MCF 10A (cell line): ENCODE measurements at regions of chr17 and their contacts with region 1.

Region 1: DNA sequence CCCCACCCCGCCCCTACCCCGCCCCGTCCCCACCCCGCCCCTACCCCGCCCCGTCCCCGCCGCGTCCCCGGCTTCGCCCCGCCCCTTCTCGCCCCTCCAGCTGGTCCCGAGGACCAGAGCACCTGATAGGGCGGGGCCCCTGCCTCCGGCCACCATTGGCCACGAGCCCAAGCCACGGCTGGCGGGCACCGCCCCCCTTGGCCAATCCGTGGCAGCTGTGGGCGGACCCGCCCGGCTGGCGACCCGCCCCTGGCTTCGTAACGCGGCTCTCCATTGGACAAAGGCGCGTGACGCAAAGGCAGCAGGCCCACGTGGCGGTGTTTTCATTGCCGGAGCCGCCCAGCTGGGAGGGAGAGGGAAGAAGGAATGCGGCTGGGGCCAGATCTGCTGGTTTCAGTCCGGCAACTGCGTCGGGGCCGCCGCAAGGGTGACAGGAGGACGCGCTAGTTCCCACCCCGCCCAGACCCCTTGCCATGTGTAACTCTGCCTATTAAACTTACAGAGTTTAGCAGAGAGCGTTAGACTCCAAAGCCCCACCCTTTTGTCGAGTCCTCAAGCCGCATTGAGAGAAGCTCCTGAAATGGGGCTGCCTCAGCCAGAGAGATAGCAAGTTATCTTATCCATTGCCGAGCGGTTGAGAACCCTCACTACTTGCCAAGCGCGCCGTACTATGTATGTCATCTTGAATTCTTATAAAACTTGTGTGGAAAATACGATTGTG is 403 bp upstream of the WIPI1 start:
- DNase-seq: peak; percentile 97
- H3K4me3 Mint-ChIP-seq: peak overlapping the region; percentile 96
- H3K27ac Mint-ChIP-seq: peak overlapping the region; percentile 51
- H3K4me1 Mint-ChIP-seq: peaks cover 33% of the 10 kb centered on the region
- H3K27me3 Mint-ChIP-seq: no peaks in the 10 kb centered on the region
- CTCF ChIP-seq: no peak

Region 2: GRCh38 chr17:67717624-67718329 is 739.9 kb before region 1 on chr17 and contains the start of gene NOL11:
- CTCF ChIA-PET with region 1: no interaction called
- POLR2A ChIA-PET with region 1: no interaction called
- intact Hi-C with region 1: loop called (anchors 5 kb)
- DNase-seq: peak; percentile 97
- H3K4me3 Mint-ChIP-seq: peak within 1 kb of the TSS; percentile 98
- H3K27ac Mint-ChIP-seq: peak within 1 kb of the TSS; percentile 100
- H3K4me1 Mint-ChIP-seq: no peaks in the 10 kb centered on the region
- H3K27me3 Mint-ChIP-seq: no peaks in the 10 kb centered on the region
- CTCF ChIP-seq: peak; percentile 74
- total RNA-seq, gene NOL11: 45.4 and 50.4 TPM in 2 replicates

Region 3: GRCh38 chr17:67993596-67994361 is 463.9 kb before region 1 on chr17:
- CTCF ChIA-PET with region 1: no interaction called
- POLR2A ChIA-PET with region 1: interaction called, 11 read pairs
- intact Hi-C with region 1: no loop called
- DNase-seq: peak; percentile 78
- H3K4me3 Mint-ChIP-seq: peak overlapping the region; percentile 91
- H3K27ac Mint-ChIP-seq: peak overlapping the region; percentile 79
- H3K4me1 Mint-ChIP-seq: peaks cover 26% of the 10 kb centered on the region
- H3K27me3 Mint-ChIP-seq: no peaks in the 10 kb centered on the region
- CTCF ChIP-seq: no peak

Region 4: GRCh38 chr17:68247445-68248198 is 210.1 kb before region 1 on chr17 and contains the start of gene AMZ2:
- CTCF ChIA-PET with region 1: interaction called, 7 read pairs
- POLR2A ChIA-PET with region 1: interaction called, 75 read pairs
- intact Hi-C with region 1: no loop called
- DNase-seq: peak; percentile 89
- H3K4me3 Mint-ChIP-seq: peak within 1 kb of the TSS; percentile 90
- H3K27ac Mint-ChIP-seq: peak within 1 kb of the TSS; percentile 74
- H3K4me1 Mint-ChIP-seq: peaks cover 5% of the 10 kb centered on the region
- H3K27me3 Mint-ChIP-seq: no peaks in the 10 kb centered on the region
- CTCF ChIP-seq: no peak
- total RNA-seq, gene AMZ2: 127 and 147 TPM in 2 replicates

Region 5: DNA sequence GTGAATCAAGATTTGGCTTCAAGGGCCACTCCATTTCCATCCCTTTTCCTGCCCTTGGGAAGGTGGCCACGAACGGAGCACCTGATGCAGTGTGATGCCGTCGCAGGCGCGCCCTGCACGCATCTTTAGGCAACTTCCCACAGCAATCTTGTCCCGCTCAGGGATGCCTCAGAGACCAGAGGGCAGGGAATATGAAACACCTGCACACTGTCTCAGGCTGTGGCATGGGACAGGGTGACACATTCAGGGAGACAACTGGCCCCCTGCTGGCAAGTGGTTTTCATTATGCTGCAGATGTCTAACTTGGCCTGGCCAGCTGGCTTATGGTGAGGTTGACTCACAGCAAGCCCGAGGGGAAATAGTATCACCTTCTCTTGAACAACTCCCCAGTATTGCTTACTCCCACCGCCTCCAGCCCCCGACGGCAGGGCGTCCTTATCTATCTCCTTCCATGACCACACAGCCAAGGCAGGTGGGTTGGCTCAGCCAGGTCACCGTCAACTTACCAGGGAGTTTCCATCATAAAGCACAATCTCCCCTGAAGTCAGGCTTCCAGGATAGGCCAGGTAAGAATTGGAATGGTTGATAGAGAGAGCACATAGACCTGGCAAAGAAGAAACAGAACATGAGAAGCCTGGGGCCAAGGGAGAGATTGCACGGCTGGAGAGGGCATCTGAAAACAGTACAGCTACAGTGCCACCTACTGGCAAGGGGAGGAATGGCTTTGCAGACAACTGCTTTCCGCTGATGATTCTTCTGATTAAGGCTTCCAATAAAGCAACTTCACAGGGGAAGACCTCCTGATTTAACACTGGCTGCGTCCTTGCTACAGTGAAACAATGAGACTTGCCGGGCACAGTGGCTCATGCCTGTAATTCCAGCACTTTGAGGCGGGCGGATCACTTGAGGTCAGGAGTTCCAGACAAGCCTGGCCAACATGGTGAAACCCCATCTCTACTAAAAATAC is 21.5 kb before region 1 on chr17:
- CTCF ChIA-PET with region 1: interaction called, 14 read pairs
- POLR2A ChIA-PET with region 1: interaction called, 28 read pairs
- intact Hi-C with region 1: loop called (anchors 1 kb)
- DNase-seq: peak; percentile 86
- H3K4me3 Mint-ChIP-seq: no peak overlapping the region
- H3K27ac Mint-ChIP-seq: no peak overlapping the region
- H3K4me1 Mint-ChIP-seq: peaks cover 9% of the 10 kb centered on the region
- H3K27me3 Mint-ChIP-seq: no peaks in the 10 kb centered on the region
- CTCF ChIP-seq: peak; percentile 82

Region 6: DNA sequence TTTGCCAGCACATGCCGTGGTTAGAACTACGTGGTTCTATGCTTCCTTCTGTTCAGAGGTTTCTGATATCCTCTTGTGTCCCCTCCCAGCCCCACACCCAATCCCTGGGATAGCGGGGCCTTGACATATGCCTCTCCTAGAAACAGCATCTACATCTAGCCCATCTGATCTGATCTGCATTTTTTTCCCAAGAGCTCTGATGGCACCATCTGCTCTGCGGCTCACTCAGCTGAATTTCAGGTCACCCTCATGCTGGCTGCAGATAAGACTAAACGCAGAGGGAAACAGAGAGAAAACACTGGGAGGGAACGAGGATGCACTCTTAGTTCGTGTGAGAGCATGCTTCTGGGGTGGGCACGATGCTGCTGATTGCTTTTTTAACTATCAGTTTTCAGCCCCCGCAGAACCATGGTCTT is 11.1 kb before region 1 on chr17:
- CTCF ChIA-PET with region 1: interaction called, 5 read pairs
- POLR2A ChIA-PET with region 1: interaction called, 23 read pairs
- intact Hi-C with region 1: no loop called
- DNase-seq: no peak
- H3K4me3 Mint-ChIP-seq: no peak overlapping the region
- H3K27ac Mint-ChIP-seq: no peak overlapping the region
- H3K4me1 Mint-ChIP-seq: no peaks in the 10 kb centered on the region
- H3K27me3 Mint-ChIP-seq: no peaks in the 10 kb centered on the region
- CTCF ChIP-seq: no peak

Region 7: GRCh38 chr17:68512247-68512982 is 54.7 kb after region 1 on chr17 and contains the start of gene PRKAR1A:
- CTCF ChIA-PET with region 1: no interaction called
- POLR2A ChIA-PET with region 1: interaction called, 114 read pairs
- intact Hi-C with region 1: no loop called
- DNase-seq: peak; percentile 91
- H3K4me3 Mint-ChIP-seq: peak within 1 kb of the TSS; percentile 95
- H3K27ac Mint-ChIP-seq: peak within 1 kb of the TSS; percentile 98
- H3K4me1 Mint-ChIP-seq: peaks cover 25% of the 10 kb centered on the region
- H3K27me3 Mint-ChIP-seq: no peaks in the 10 kb centered on the region
- CTCF ChIP-seq: no peak
- total RNA-seq, gene PRKAR1A: 264 and 271 TPM in 2 replicates

Region 8: DNA sequence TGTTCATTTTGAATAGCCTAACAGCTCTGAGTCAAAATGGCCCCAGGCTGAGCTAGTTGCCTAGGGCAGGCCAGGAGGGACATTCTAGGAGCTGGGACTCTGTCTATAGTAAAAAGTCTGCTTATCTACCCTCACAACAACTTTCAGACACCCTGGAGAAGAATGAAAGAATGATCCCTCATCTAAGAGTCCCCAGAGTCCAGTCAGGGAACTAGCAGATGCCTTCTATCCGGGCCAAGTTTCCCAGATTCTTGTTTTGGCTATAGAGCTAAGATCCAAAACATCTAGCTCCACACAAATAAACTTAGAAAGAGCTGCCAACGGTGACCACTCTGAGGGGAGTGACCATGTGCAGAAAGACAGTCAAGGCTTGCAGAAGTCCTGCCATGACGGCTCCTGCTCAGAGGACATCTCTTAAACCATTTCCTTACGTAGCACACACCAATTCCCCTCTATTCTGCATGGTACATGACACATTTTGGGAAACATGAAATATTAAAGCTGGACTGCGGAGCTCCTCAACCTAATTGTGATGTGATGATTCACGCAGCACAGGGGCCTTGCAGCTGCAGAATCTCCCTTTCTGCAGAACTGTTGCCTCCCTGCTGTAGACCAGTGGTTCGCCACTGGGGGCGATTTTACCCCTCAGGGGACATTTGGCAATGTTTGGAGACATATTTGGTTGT is 119.3 kb after region 1 on chr17:
- CTCF ChIA-PET with region 1: no interaction called
- POLR2A ChIA-PET with region 1: no interaction called
- intact Hi-C with region 1: no loop called
- DNase-seq: no peak
- H3K4me3 Mint-ChIP-seq: no peak overlapping the region
- H3K27ac Mint-ChIP-seq: no peak overlapping the region
- H3K4me1 Mint-ChIP-seq: no peaks in the 10 kb centered on the region
- H3K27me3 Mint-ChIP-seq: no peaks in the 10 kb centered on the region
- CTCF ChIP-seq: no peak